ENCODE measurements at regions of chr3 and their contacts with region 1.

Region 1: DNA sequence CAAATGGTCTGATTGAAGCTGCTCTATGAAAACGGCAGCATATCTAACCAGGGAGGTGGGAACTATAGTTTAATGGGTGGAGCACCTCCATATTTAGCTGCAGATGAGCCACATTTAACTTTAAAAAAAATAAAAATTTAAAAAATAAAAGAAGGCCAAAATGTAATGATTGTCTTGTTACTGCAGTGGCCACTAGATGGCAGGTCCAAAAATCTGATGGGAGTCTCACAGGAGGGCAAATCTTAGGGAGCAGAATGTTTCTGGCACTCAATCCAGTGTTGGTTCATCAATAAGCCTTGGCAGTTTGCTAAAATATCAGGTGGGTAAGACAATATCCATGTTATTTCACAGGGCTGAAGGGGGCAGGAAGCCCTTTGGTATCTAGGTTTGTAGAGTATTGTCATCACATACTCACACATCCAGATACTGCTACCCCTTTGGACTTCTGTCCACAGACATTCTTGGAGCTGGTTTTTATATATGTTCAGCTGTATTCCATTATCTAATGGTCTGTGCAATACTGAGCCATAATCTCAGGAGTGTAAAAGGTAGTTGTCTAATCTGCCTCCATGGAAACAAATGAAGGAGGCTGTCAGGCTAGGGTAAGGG is 233.3 kb downstream of the TIGIT start:
- DNase-seq: no peak
- ATAC-seq: no peak
- H3K4me3 ChIP-seq: no peak overlapping the region
- H3K27ac ChIP-seq: no peak overlapping the region
- H3K4me1 ChIP-seq: peaks cover 0 to 8% of the 10 kb centered on the region in 2 donors
- H3K27me3 ChIP-seq: no peaks in the 10 kb centered on the region
- CTCF ChIP-seq: peak; percentile 8 to 52 (median 32)
- POLR2A ChIP-seq: no peak

Region 2: GRCh38 chr3:114639171-114639570 is 112.0 kb after region 1 on chr3:
- in situ Hi-C with region 1: no loop called
- intact Hi-C with region 1: no loop called
- DNase-seq: no peak
- ATAC-seq: no peak
- H3K4me3 ChIP-seq: no peak overlapping the region
- H3K27ac ChIP-seq: no peak overlapping the region
- H3K4me1 ChIP-seq: no peaks in the 10 kb centered on the region
- H3K27me3 ChIP-seq: no peaks in the 10 kb centered on the region
- CTCF ChIP-seq: no peak
- POLR2A ChIP-seq: no peak

Region 3: GRCh38 chr3:114668099-114668498 is 141.0 kb after region 1 on chr3:
- in situ Hi-C with region 1: no loop called
- intact Hi-C with region 1: no loop called
- DNase-seq: no peak
- ATAC-seq: peak; percentile 58 to 77
- H3K4me3 ChIP-seq: no peak overlapping the region
- H3K27ac ChIP-seq: no peak overlapping the region
- H3K4me1 ChIP-seq: peaks cover 5 to 24% of the 10 kb centered on the region in 2 donors
- H3K27me3 ChIP-seq: no peaks in the 10 kb centered on the region
- CTCF ChIP-seq: no peak
- POLR2A ChIP-seq: no peak

Region 4: GRCh38 chr3:114985776-114986175 is 458.6 kb after region 1 on chr3:
- in situ Hi-C with region 1: no loop called
- intact Hi-C with region 1: loop called (anchors 5 kb)
- DNase-seq: no peak
- ATAC-seq: no peak
- H3K4me3 ChIP-seq: no peak overlapping the region
- H3K27ac ChIP-seq: no peak overlapping the region
- H3K4me1 ChIP-seq: peaks cover 0 to 15% of the 10 kb centered on the region in 2 donors
- H3K27me3 ChIP-seq: no peaks in the 10 kb centered on the region
- CTCF ChIP-seq: no peak
- POLR2A ChIP-seq: no peak

Measured in gastrocnemius medialis (tissue), 4 donors.